CD4-positive, alpha-beta memory T cell (primary cell): ENCODE measurements at regions of chr14 and their contacts with region 1.

Region 1: DNA sequence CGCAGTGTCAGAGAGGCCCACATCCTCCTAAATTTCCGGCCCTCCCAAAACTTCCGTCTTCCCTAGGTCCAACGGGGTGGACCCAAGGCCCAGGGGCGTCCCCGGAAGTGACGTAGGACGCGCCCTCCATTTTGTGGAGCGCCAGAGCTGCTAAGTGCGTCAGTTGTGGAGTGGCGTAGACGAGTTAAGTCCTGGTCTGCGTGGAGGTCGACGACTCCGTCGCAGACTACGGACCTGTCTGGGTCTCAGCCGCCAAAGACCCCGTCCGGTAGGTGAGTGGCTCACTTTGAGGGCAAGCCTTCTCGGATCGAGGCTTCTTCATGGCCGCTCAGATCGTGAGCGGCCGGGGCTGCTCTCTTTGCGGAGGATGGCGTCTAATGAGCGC is at the start of gene SRSF5:
- DNase-seq: peak; percentile 92 to 95 (median 94)
- H3K4me3 ChIP-seq: peak within 1 kb of the TSS; percentile 83 to 95
- H3K4me3 Mint-ChIP-seq: peak within 1 kb of the TSS; percentile 98 to 100 (median 100)
- H3K27ac ChIP-seq: peak within 1 kb of the TSS; percentile 100
- H3K27ac Mint-ChIP-seq: peak within 1 kb of the TSS; percentile 100
- H3K4me1 ChIP-seq: peaks cover 48% of the 10 kb centered on the region
- H3K4me1 Mint-ChIP-seq: peaks cover 41 to 79% (median 57%) of the 10 kb centered on the region in 4 donors
- H3K27me3 ChIP-seq: no peaks in the 10 kb centered on the region
- H3K27me3 Mint-ChIP-seq: no peaks in the 10 kb centered on the region
- total RNA-seq, gene SRSF5: 946 to 964 TPM

Region 2: GRCh38 chr14:69398053-69398817 is 368.7 kb before region 1 on chr14 and contains the starts of genes ERH and SLC39A9:
- CTCF ChIA-PET with region 1: interaction called, 3 read pairs
- POLR2A ChIA-PET with region 1: interaction called, 20 read pairs
- intact Hi-C with region 1: loop called (anchors 1 kb)
- DNase-seq: peak; percentile 96 to 98 (median 96)
- H3K4me3 ChIP-seq: peak within 1 kb of the TSS; percentile 86 to 91
- H3K4me3 Mint-ChIP-seq: peak within 1 kb of the TSS; percentile 91 to 99 (median 96)
- H3K27ac ChIP-seq: peak within 1 kb of the TSS; percentile 87
- H3K27ac Mint-ChIP-seq: peak within 1 kb of the TSS; percentile 98 to 100 (median 100)
- H3K4me1 ChIP-seq: peaks cover 81% of the 10 kb centered on the region
- H3K4me1 Mint-ChIP-seq: peaks cover 41 to 89% (median 59%) of the 10 kb centered on the region in 4 donors
- H3K27me3 ChIP-seq: no peaks in the 10 kb centered on the region
- H3K27me3 Mint-ChIP-seq: no peaks in the 10 kb centered on the region
- total RNA-seq, gene ERH: 118 to 135 TPM
- total RNA-seq, gene SLC39A9: 33.7 to 38.6 TPM

Region 3: GRCh38 chr14:69625299-69626131 is 141.5 kb before region 1 on chr14:
- CTCF ChIA-PET with region 1: no interaction called
- POLR2A ChIA-PET with region 1: interaction called, 14 read pairs
- intact Hi-C with region 1: no loop called
- DNase-seq: peak; percentile 71 to 88 (median 75)
- H3K4me3 ChIP-seq: peak overlapping the region; percentile 8 to 21
- H3K4me3 Mint-ChIP-seq: peak overlapping the region; percentile 70 to 88 (median 78)
- H3K27ac ChIP-seq: peak overlapping the region; percentile 52
- H3K27ac Mint-ChIP-seq: peak overlapping the region; percentile 84 to 96 (median 91)
- H3K4me1 ChIP-seq: peaks cover 98% of the 10 kb centered on the region
- H3K4me1 Mint-ChIP-seq: peaks cover 68 to 96% (median 87%) of the 10 kb centered on the region in 4 donors
- H3K27me3 ChIP-seq: no peaks in the 10 kb centered on the region
- H3K27me3 Mint-ChIP-seq: no peaks in the 10 kb centered on the region

Region 4: GRCh38 chr14:69755784-69756183 is 11.2 kb before region 1 on chr14:
- CTCF ChIA-PET with region 1: interaction called, 4 read pairs
- POLR2A ChIA-PET with region 1: interaction called, 35 read pairs
- intact Hi-C with region 1: no loop called
- DNase-seq: no peak
- H3K4me3 ChIP-seq: no peak overlapping the region
- H3K4me3 Mint-ChIP-seq: peak overlapping the region in 4 of 8 donors; percentile 12 to 40 (median 27)
- H3K27ac ChIP-seq: no peak overlapping the region
- H3K27ac Mint-ChIP-seq: peak overlapping the region in 3 of 7 donors; percentile 1 to 75 (median 58)
- H3K4me1 ChIP-seq: peaks cover 14% of the 10 kb centered on the region
- H3K4me1 Mint-ChIP-seq: peaks cover 7 to 12% (median 10%) of the 10 kb centered on the region in 4 donors
- H3K27me3 ChIP-seq: no peaks in the 10 kb centered on the region
- H3K27me3 Mint-ChIP-seq: no peaks in the 10 kb centered on the region

Region 5: GRCh38 chr14:69780952-69781351 is 14.0 kb after region 1 on chr14:
- CTCF ChIA-PET with region 1: no interaction called
- POLR2A ChIA-PET with region 1: interaction called, 56 read pairs
- intact Hi-C with region 1: no loop called
- DNase-seq: no peak
- H3K4me3 ChIP-seq: no peak overlapping the region
- H3K4me3 Mint-ChIP-seq: no peak overlapping the region
- H3K27ac ChIP-seq: no peak overlapping the region
- H3K27ac Mint-ChIP-seq: peak overlapping the region in 3 of 7 donors; percentile 30 to 51 (median 38)
- H3K4me1 ChIP-seq: peaks cover 28% of the 10 kb centered on the region
- H3K4me1 Mint-ChIP-seq: peaks cover 23 to 46% (median 26%) of the 10 kb centered on the region in 4 donors
- H3K27me3 ChIP-seq: no peaks in the 10 kb centered on the region
- H3K27me3 Mint-ChIP-seq: no peaks in the 10 kb centered on the region

Region 6: GRCh38 chr14:69812714-69813113 is 45.7 kb after region 1 on chr14:
- CTCF ChIA-PET with region 1: no interaction called
- POLR2A ChIA-PET with region 1: no interaction called
- intact Hi-C with region 1: no loop called
- DNase-seq: no peak
- H3K4me3 ChIP-seq: no peak overlapping the region
- H3K4me3 Mint-ChIP-seq: no peak overlapping the region
- H3K27ac ChIP-seq: no peak overlapping the region
- H3K27ac Mint-ChIP-seq: no peak overlapping the region
- H3K4me1 ChIP-seq: no peaks in the 10 kb centered on the region
- H3K4me1 Mint-ChIP-seq: no peaks in the 10 kb centered on the region
- H3K27me3 ChIP-seq: no peaks in the 10 kb centered on the region
- H3K27me3 Mint-ChIP-seq: peaks cover 2 to 11% of the 10 kb centered on the region in 2 donors

Region 7: DNA sequence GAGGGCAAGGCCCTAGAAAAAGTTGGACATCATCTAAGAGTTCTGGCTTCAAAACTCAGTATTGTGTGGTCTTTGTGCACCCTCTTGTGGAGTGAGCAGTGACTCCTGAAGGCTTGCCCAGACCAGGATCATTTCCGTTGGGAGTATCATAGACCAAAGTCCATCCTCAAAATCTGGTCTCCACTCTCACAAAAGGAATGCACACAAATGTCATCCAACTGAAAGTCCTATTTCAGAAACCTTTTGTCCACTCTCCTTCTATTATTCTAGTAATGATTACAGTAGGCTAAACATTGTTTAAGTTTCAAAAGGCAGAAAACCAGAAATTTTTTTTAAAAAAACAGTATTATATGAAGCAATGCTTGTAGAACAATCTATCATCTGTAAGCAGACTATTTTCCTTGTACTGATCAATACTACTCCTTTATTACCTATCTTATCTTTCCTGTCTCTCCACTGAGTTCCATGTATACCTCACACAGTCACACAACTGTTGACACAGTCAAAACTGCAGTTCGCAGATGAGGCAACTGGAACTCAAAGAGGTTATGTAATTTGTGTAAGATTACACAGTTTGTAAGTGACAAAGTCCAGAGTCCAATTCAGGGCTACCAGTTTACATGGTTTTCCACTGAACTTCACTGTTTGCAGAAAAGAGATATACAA is 551.1 kb after region 1 on chr14:
- CTCF ChIA-PET with region 1: no interaction called
- POLR2A ChIA-PET with region 1: no interaction called
- intact Hi-C with region 1: no loop called
- DNase-seq: no peak
- H3K4me3 ChIP-seq: no peak overlapping the region
- H3K4me3 Mint-ChIP-seq: no peak overlapping the region
- H3K27ac ChIP-seq: no peak overlapping the region
- H3K27ac Mint-ChIP-seq: no peak overlapping the region
- H3K4me1 ChIP-seq: no peaks in the 10 kb centered on the region
- H3K4me1 Mint-ChIP-seq: no peaks in the 10 kb centered on the region
- H3K27me3 ChIP-seq: no peaks in the 10 kb centered on the region
- H3K27me3 Mint-ChIP-seq: peaks cover 7 to 11% of the 10 kb centered on the region in 2 donors

Region 8: GRCh38 chr14:70359181-70360090 is 592.5 kb after region 1 on chr14 and contains the start of gene COX16:
- CTCF ChIA-PET with region 1: no interaction called
- POLR2A ChIA-PET with region 1: interaction called, 5 read pairs
- intact Hi-C with region 1: loop called (anchors 10 kb)
- DNase-seq: peak; percentile 76 to 88 (median 82)
- H3K4me3 ChIP-seq: peak within 1 kb of the TSS; percentile 70 to 95
- H3K4me3 Mint-ChIP-seq: peak within 1 kb of the TSS; percentile 96 to 100 (median 100)
- H3K27ac ChIP-seq: peak within 1 kb of the TSS; percentile 62
- H3K27ac Mint-ChIP-seq: peak within 1 kb of the TSS; percentile 84 to 98 (median 97)
- H3K4me1 ChIP-seq: peaks cover 40% of the 10 kb centered on the region
- H3K4me1 Mint-ChIP-seq: peaks cover 35 to 53% (median 45%) of the 10 kb centered on the region in 4 donors
- H3K27me3 ChIP-seq: no peaks in the 10 kb centered on the region
- H3K27me3 Mint-ChIP-seq: no peaks in the 10 kb centered on the region
- total RNA-seq, gene COX16: 24.5 to 26.2 TPM

Region 9: DNA sequence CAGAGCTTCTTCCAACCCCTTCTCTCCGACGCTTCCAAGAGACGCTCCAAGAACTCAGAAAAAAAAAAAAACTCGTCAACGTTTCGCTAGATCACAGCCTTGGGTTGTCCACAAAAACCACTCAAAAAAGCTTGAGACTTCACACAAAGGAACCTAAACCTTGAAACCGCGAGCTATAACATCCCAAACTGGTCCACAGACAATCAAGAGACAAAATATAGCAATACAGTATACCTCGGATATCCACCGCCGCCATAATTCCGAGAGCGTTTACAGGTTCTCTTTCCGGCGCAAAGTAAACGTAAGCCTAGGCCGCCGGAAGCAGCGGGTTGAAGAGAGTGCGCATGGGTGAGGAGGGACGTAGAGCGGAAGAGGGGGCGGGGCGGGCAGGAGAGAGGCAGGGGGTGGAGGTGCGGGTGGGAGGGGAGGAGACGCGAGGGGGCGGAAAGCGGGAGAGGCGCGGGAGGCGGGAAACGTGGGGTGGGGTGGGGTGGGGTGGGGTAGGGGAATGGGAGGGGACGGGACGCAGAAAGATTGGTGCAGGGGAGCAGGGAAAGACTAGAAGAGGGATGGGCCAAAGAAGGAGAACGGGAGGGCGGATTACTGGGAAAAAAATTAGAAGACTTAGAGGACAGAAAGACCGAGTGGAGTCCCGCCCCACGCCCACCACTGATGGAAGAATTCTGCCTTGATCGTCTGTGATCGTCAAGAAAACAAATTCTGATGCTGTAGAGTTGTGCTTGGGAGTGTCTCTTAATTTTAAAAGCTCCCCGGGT is 833.6 kb after region 1 on chr14 and contains the start of gene MED6:
- CTCF ChIA-PET with region 1: no interaction called
- POLR2A ChIA-PET with region 1: interaction called, 3 read pairs
- intact Hi-C with region 1: loop called (anchors 2 kb)
- DNase-seq: peak; percentile 89 to 95 (median 90)
- H3K4me3 ChIP-seq: peak within 1 kb of the TSS; percentile 99
- H3K4me3 Mint-ChIP-seq: peak within 1 kb of the TSS; percentile 96 to 100 (median 100)
- H3K27ac ChIP-seq: peak within 1 kb of the TSS; percentile 77
- H3K27ac Mint-ChIP-seq: peak within 1 kb of the TSS; percentile 87 to 99 (median 98)
- H3K4me1 ChIP-seq: peaks cover 21% of the 10 kb centered on the region
- H3K4me1 Mint-ChIP-seq: peaks cover 12 to 34% (median 22%) of the 10 kb centered on the region in 4 donors
- H3K27me3 ChIP-seq: no peaks in the 10 kb centered on the region
- H3K27me3 Mint-ChIP-seq: peaks cover 0 to 3% of the 10 kb centered on the region in 2 donors
- total RNA-seq, gene MED6: 57.0 to 61.8 TPM